ENCODE measurements at regions of chr20 and their contacts with region 1.

Region 1: GRCh38 chr20:49610701-49611538 is 43.0 kb upstream of the PTGIS start:
- DNase-seq: peak; percentile 91
- CTCF ChIP-seq: peak; percentile 93

Region 2: GRCh38 chr20:49151436-49151835 is 459.5 kb before region 1 on chr20:
- in situ Hi-C with region 1: no loop called
- DNase-seq: no peak
- CTCF ChIP-seq: no peak

Region 3: DNA sequence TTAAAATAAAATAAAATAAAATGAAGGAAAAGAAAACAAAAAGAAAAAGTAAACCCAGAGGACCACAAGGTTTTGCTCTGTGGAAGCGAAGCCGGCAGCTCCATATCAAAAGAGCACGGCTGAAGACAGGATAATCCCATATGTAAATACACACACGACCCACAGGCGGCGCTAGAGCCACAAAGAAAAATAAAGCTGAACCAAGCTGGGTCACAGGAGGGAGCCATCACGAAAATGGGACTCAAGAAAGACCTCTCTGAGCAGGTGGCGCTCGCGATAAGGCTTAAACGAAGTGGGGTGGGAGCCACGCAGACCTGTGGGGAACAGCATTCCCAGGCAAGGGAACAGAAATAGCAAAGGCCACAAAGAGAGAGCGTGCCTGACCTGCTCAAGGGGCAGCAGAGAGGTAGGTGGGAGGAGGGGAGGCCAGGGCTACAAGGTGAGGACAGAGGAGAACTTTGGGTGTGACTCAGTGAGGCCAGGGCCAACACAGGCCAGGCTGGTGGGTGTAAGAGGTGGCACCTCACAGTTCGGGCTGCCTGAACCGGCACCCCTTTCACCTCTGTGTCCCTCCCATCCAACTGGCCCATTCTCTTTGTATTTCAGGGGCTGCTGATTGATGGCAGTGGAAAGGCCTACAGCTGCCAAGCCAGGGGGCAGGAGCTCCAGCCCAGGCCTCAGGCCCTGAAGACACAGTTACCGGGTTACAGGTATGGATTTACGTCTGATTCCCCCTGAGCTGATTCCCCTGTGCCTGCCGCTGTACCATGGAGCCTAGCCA is 69.0 kb before region 1 on chr20:
- in situ Hi-C with region 1: loop called (anchors 5 kb)
- DNase-seq: peak; percentile 84
- CTCF ChIP-seq: peak; percentile 75

Region 4: DNA sequence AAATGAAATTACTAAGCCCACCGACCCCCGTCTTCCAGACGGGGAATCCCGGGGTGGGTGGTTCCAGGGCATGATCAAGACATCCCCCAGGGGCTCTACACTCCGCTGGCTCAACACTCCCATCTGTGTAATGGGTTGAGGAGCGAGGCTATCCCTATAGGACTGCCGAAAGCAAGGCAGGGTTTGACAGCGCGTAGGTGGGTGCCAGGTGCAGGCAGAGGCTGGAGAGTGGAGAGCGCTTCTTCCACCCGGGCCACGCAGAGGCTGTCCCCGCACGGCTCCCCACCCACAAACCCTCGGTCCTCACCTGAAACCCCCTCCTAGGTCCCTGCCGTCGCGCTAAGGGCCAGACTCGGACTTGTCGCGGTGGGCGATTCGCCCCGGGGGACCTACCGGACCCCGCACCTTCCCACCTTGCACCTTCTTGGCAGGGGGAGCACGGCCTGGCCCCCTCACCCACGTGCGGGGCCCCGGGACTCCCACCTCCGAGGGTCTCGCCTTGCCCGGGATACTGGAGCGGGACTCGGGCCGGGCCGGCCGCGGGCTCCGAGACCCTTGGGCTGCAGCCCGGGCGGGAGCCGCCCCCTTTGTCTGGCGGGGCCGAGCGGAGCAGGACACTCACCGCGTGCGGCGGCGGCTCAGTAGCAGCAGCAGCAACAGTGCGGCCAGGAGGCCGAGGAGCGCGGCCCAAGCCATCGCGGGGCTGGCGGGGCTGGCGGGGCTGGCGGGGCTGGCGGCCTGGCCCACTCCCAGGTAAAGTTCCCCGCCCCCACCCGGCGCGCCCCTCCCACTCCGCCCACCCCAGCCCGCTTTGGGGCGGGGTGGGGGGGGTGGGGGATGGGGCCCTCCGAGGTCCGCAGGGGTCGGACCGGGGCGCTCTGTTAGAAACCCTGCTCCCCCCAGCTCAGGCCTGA is 43.2 kb before region 1 on chr20 and contains the start of gene PTGIS:
- in situ Hi-C with region 1: no loop called
- DNase-seq: no peak
- CTCF ChIP-seq: no peak

Region 5: DNA sequence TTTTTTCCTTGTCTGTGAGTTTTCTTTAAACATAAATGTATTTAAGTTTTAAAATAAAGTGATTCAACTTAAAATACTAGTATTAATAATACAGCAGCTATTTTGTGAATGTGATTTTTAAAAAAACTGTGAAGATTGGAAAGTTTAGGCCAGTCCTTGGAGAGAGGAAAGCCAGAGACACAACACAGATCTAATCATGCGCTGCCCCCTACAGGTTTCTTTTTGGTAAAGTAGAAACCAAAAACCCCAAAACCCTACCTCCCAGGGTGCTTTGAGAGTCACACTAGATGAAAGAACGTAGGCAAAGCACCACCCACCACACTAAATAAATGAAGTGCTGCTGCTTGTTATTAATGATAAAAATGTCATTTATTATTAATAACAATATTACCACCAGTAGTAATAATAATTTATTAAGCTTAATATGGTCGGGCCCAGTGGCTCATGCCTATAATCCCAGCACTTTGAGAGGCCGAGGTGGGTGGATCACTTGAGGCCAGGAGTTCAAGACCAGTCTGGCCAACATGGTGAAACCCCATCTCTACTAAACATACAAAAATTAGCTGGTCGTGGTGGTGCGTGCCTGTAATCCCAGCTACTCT is 235.4 kb after region 1 on chr20:
- in situ Hi-C with region 1: loop called (anchors 10 kb)
- DNase-seq: peak; percentile 67
- CTCF ChIP-seq: peak; percentile 34

Measured in GM13976 (cell line).